Stomach (tissue), 19 donors: ENCODE measurements at regions of chr7 and their contacts with region 1.

Region 1: GRCh38 chr7:85023045-85023712 is 163.7 kb downstream of the SEMA3D start:
- DNase-seq: peak in 1 of 2 donors; percentile 76
- H3K4me3 ChIP-seq: no peak overlapping the region
- H3K27ac ChIP-seq: no peak overlapping the region
- H3K4me1 ChIP-seq: peaks cover 0 to 17% (median 8%) of the 10 kb centered on the region in 4 donors
- H3K27me3 ChIP-seq: no peaks in the 10 kb centered on the region
- CTCF ChIP-seq: peak in 4 of 7 experiments; percentile 23 to 79 (median 65)
- EP300 ChIP-seq: no peak
- POLR2A ChIP-seq: no peak

Region 2: DNA sequence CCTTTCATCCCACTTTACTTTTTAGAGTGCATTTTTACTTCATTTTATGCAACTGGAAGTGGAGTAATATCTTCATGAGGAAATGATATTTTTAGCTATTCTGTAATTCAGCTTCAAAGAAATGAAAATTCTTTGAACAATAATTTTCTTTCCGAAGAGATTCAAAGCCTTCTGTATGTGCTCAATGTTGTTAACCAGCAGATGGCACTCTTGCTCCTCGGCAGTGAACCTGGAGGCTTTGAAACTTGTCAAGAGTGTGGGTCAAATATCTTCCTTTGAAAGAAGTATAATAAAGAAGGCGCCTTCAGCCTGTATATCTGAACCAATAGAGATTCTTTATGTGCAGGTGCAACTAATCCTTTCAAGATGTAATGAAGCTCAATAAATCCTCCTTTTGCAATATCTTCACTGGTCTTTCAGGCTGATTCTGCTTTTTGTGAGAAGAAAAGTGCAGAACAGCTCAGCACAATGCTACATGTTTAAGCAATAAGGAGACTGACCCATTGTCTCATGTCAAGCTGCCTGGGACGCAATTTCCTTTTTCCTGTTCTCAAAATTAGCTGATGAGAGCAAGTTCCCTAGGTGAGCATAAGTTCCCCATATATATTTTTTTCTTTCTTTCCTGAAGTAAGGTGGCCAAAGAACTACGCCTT is 1087.0 kb before region 1 on chr7:
- intact Hi-C with region 1: loop called (anchors 10 kb)
- DNase-seq: peak; percentile 47 to 90
- H3K4me3 ChIP-seq: no peak overlapping the region
- H3K27ac ChIP-seq: no peak overlapping the region
- H3K4me1 ChIP-seq: peaks cover 0 to 7% (median 0%) of the 10 kb centered on the region in 4 donors
- H3K27me3 ChIP-seq: no peaks in the 10 kb centered on the region
- CTCF ChIP-seq: peak in 5 of 7 experiments; percentile 23 to 72 (median 62)
- EP300 ChIP-seq: no peak
- POLR2A ChIP-seq: no peak

Region 3: GRCh38 chr7:83976295-83976694 is 1046.9 kb before region 1 on chr7:
- intact Hi-C with region 1: loop called (anchors 10 kb)
- DNase-seq: peak in 1 of 2 donors; percentile 73
- H3K4me3 ChIP-seq: no peak overlapping the region
- H3K27ac ChIP-seq: no peak overlapping the region
- H3K4me1 ChIP-seq: peaks cover 0 to 7% (median 0%) of the 10 kb centered on the region in 4 donors
- H3K27me3 ChIP-seq: no peaks in the 10 kb centered on the region
- CTCF ChIP-seq: peak in 5 of 7 experiments; percentile 44 to 70 (median 61)
- EP300 ChIP-seq: no peak
- POLR2A ChIP-seq: no peak

Region 4: DNA sequence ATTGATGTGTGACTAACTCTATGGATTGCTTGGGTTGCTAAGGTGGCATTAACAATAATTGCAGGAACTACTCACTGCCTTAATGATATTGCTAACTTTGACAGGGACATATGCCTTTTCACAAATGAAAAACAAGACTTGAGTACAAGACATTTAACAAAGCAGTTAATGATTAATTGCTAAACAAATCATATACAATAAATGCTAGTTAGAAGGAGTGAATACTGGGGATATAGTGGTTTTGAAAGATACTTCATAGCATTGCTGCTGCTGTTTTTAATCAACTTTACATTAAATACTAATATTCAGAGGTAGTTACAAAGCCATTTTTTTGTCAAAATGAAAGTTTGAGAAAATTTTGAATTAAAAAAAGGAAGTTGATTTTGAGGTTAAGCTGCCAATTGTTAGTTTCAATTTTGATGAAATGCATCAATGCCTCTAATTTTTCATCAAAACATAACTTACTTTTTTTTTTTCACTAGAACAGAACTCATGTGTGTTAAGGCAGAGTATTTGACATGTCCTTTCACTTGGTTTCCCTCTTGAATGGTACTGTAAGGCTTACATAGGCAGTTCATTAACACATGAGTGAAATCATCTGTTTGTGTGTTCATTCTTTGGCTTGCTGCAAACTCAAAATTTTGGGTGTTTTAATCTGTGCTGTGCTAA is 269.9 kb after region 1 on chr7:
- intact Hi-C with region 1: no loop called
- DNase-seq: peak in 1 of 2 donors; percentile 19
- H3K4me3 ChIP-seq: no peak overlapping the region
- H3K27ac ChIP-seq: no peak overlapping the region
- H3K4me1 ChIP-seq: no peaks in the 10 kb centered on the region
- H3K27me3 ChIP-seq: no peaks in the 10 kb centered on the region
- CTCF ChIP-seq: no peak
- EP300 ChIP-seq: no peak
- POLR2A ChIP-seq: no peak

Region 5: DNA sequence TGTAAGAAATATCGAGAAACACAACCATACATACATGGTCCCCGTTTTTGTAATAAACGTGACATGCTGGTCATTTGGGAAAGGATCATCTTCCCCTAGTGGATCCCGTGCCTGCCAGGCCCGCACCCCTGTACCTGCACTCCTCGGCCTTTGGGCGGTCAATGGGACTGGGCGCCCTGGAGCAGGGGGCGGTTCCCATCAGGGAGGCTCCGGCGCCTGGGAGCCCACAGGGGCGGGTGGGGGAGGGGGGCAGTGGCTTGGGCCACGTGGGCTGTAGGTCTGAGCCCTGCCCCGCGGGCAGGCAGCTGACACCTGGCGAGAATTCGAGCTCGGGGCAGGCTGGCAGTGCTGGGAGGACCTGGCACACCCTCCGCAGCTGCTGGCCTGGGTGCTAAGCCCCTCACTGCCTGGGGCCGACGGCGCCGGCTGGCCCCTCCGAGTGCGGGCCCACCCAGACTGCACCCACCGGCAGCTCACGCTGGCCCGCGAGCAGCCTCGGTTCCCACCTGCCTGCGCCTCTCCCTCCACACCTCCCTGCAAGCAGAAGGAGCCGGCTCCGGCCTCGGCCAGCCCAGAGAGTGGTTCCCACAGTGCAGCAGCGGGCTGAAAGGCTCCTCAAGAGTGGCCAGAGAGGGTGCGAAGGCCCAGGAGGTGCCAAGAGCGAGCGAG is 1259.0 kb after region 1 on chr7:
- intact Hi-C with region 1: no loop called
- DNase-seq: no peak
- H3K4me3 ChIP-seq: no peak overlapping the region
- H3K27ac ChIP-seq: no peak overlapping the region
- H3K4me1 ChIP-seq: no peaks in the 10 kb centered on the region
- H3K27me3 ChIP-seq: no peaks in the 10 kb centered on the region
- CTCF ChIP-seq: no peak
- EP300 ChIP-seq: no peak
- POLR2A ChIP-seq: no peak